Mammary epithelial cell (primary cell): ENCODE measurements at regions of chr12 and their contacts with region 1.

Region 1: GRCh38 chr12:103401421-103401820 is 94.3 kb downstream of the C12orf42 start:
- DNase-seq: peak; percentile 78
- H3K4me3 ChIP-seq: no peak overlapping the region
- H3K27ac ChIP-seq: no peak overlapping the region
- H3K4me1 ChIP-seq: peaks cover 5% of the 10 kb centered on the region
- H3K27me3 ChIP-seq: no peaks in the 10 kb centered on the region
- CTCF ChIP-seq: peak; percentile 56 to 61

Region 2: DNA sequence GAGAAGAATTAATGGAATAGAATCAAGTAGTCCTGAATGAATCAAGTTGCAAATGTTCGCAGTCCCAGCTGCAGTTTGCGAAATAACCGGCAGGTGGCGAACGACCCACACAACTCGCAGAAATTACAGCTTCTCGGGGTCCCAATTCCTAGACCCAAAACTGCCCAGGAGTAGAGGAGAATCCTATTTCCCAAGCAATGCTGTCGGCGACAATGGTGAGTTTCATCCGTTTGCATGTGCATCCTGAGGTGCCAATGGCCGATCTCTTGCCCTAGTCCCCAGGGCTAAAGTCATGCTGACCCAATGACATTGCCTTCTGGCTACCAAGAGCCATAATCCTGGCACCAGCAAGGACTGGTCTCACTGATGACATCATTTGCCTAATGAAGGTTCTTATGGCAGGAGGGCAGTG is 452.5 kb before region 1 on chr12:
- CTCF ChIA-PET with region 1: no interaction called
- dilution Hi-C with region 1: no loop called
- in situ Hi-C with region 1: no loop called
- intact Hi-C with region 1: loop called (anchors 5 kb)
- DNase-seq: no peak
- H3K4me3 ChIP-seq: no peak overlapping the region
- H3K27ac ChIP-seq: no peak overlapping the region
- H3K4me1 ChIP-seq: peaks cover 4% of the 10 kb centered on the region
- H3K27me3 ChIP-seq: peaks cover 25% of the 10 kb centered on the region
- CTCF ChIP-seq: peak; percentile 81 to 94

Region 3: GRCh38 chr12:103318533-103318932 is 82.9 kb before region 1 on chr12:
- CTCF ChIA-PET with region 1: no interaction called
- dilution Hi-C with region 1: no loop called
- in situ Hi-C with region 1: no loop called
- intact Hi-C with region 1: no loop called
- DNase-seq: no peak
- H3K4me3 ChIP-seq: no peak overlapping the region
- H3K27ac ChIP-seq: no peak overlapping the region
- H3K4me1 ChIP-seq: no peaks in the 10 kb centered on the region
- H3K27me3 ChIP-seq: peaks cover 5% of the 10 kb centered on the region
- CTCF ChIP-seq: no peak

Region 4: GRCh38 chr12:103387385-103387784 is 14.0 kb before region 1 on chr12:
- CTCF ChIA-PET with region 1: no interaction called
- dilution Hi-C with region 1: no loop called
- in situ Hi-C with region 1: no loop called
- intact Hi-C with region 1: no loop called
- DNase-seq: no peak
- H3K4me3 ChIP-seq: no peak overlapping the region
- H3K27ac ChIP-seq: no peak overlapping the region
- H3K4me1 ChIP-seq: no peaks in the 10 kb centered on the region
- H3K27me3 ChIP-seq: no peaks in the 10 kb centered on the region
- CTCF ChIP-seq: no peak

Region 5: DNA sequence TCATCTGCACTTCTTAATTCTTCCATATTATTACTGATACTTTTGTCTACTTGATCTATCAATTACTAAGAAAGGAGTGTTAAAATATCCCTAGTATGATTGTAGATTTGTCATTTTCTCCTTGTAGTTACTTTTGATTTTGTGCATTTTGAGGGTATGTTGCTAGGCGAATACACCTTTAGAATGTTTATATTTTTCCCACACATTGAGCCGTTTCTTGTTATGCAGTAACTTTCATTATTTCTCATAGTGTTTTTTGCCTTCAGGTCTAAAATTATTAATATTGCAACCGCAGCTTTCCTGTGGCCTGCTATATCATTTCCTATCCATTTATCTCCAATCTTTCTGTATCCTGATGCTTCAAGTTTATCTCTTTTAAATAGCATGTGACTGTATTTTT is 138.9 kb after region 1 on chr12:
- CTCF ChIA-PET with region 1: no interaction called
- dilution Hi-C with region 1: no loop called
- in situ Hi-C with region 1: no loop called
- intact Hi-C with region 1: no loop called
- DNase-seq: no peak
- H3K4me3 ChIP-seq: no peak overlapping the region
- H3K27ac ChIP-seq: no peak overlapping the region
- H3K4me1 ChIP-seq: no peaks in the 10 kb centered on the region
- H3K27me3 ChIP-seq: no peaks in the 10 kb centered on the region
- CTCF ChIP-seq: no peak

Region 6: GRCh38 chr12:103600967-103601728 is 199.7 kb after region 1 on chr12:
- CTCF ChIA-PET with region 1: no interaction called
- dilution Hi-C with region 1: no loop called
- in situ Hi-C with region 1: no loop called
- intact Hi-C with region 1: no loop called
- DNase-seq: no peak
- H3K4me3 ChIP-seq: no peak overlapping the region
- H3K27ac ChIP-seq: no peak overlapping the region
- H3K4me1 ChIP-seq: no peaks in the 10 kb centered on the region
- H3K27me3 ChIP-seq: peaks cover 2% of the 10 kb centered on the region
- CTCF ChIP-seq: no peak